ENCODE measurements at regions of chr5 and their contacts with region 1.

Region 1: DNA sequence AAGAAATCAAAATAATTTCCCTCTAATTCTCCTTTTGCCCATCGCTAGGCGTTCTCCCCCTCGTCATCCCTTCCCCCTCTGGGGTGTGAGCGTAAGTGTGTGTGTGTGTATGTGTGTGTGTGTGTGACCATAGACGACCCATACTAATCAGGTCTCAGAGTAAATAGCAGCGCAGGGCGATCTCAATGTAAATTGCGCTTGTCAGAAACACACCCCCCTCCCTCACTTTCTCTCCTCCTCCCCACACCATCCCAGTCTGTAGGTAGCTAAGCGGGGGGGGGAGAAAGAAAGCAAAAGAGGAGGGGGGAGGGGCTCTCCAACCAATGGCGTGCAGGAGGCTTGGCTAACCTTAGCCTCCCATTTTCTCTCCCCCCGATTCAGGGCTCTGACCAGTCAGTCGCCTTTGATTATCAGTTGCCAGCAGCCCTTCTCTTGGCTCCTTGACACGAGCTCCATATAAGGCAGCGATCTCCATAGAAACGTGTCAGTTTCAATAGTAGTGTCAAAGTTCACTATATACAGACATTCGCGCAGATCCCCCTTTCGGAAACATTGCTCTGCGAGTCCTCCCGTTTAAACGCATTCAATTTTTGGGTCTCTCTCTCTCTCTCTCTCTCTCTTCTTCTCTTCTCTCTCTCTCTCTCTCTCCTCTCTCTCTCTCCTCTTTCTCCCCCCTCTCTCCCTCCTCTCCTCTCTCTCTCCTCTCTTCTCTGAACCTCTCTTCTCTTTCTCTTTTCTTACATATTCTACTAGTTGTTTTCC is at the start of gene NR2F1:
- DNase-seq: no peak
- H3K4me3 ChIP-seq: peak within 1 kb of the TSS; percentile 56
- H3K27ac ChIP-seq: peak within 1 kb of the TSS; percentile 68 to 79
- H3K4me1 ChIP-seq: no peaks in the 10 kb centered on the region
- H3K27me3 ChIP-seq: no peaks in the 10 kb centered on the region
- CTCF ChIP-seq: peak in 2 of 4 experiments; percentile 90 to 94
- POLR2A ChIP-seq: no peak
- total RNA-seq, gene NR2F1: 14.9 to 49.3 TPM

Region 2: DNA sequence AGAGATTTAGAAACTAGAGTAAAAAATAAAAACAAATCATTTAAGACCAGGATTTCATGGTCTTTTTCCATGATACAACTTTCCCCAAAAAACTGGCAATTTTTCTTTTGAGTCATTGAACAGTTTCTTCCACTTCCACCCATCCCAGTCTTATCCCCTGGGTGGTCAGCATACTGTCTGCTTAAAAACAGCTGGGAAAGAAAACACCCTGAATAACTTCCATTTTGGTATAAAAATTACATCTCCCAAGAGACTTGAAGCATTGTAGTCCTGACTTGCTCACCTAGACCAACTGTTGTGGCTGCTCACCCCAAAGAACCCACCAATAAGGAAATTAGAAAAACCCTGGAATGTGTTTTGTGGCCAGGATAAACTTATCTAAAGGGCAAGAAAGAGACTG is 733.1 kb before region 1 on chr5:
- intact Hi-C with region 1: loop called (anchors 5 kb)
- DNase-seq: no peak
- H3K4me3 ChIP-seq: no peak overlapping the region
- H3K27ac ChIP-seq: no peak overlapping the region
- H3K4me1 ChIP-seq: no peaks in the 10 kb centered on the region
- H3K27me3 ChIP-seq: no peaks in the 10 kb centered on the region
- CTCF ChIP-seq: no peak
- POLR2A ChIP-seq: no peak

Region 3: DNA sequence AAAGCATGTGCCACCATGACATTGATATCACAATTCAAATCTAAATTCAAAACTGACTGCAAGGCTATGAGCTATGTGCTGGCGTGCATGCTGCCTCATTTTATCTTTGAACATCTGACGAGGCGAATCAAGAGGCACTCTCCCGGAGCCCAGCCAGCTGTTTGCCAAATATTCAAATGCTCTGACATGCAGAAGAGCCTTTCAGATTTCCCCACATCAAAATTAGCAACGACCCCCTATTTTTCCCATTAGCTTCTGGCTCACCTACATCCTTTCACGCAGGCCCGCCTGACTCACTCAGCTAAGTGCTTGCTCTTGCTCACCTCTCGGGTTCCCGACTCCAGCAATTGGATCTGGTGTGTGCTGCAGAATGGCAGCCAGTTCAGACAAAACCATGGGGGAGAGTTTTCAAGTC is 160.9 kb before region 1 on chr5:
- intact Hi-C with region 1: loop called (anchors 10 kb)
- DNase-seq: no peak
- H3K4me3 ChIP-seq: no peak overlapping the region
- H3K27ac ChIP-seq: no peak overlapping the region
- H3K4me1 ChIP-seq: no peaks in the 10 kb centered on the region
- H3K27me3 ChIP-seq: no peaks in the 10 kb centered on the region
- CTCF ChIP-seq: no peak
- POLR2A ChIP-seq: no peak

Region 4: DNA sequence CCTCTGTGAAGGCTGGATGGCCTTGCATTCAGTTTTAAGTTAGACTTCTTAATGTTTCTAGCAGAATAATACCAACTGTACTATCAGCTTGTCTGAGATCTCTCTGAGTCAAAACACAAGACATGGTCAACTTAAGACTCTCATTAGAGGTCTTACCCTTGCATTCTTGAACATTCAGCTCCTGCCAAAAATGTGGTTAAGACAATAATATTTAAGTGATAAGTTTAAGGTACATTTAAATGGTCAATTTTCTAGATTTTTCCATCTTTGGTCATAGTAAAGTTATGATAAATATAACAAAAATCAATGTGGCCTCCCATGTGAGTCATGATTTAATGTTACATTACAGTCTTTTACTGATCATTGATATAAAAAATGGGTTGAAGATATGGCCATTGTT is 75.2 kb after region 1 on chr5:
- intact Hi-C with region 1: no loop called
- DNase-seq: no peak
- H3K4me3 ChIP-seq: no peak overlapping the region
- H3K27ac ChIP-seq: no peak overlapping the region
- H3K4me1 ChIP-seq: no peaks in the 10 kb centered on the region
- H3K27me3 ChIP-seq: no peaks in the 10 kb centered on the region
- CTCF ChIP-seq: no peak
- POLR2A ChIP-seq: no peak

Region 5: GRCh38 chr5:93800988-93801811 is 218.3 kb after region 1 on chr5:
- intact Hi-C with region 1: loop called (anchors 5 kb)
- DNase-seq: peak; percentile 41
- H3K4me3 ChIP-seq: no peak overlapping the region
- H3K27ac ChIP-seq: no peak overlapping the region
- H3K4me1 ChIP-seq: no peaks in the 10 kb centered on the region
- H3K27me3 ChIP-seq: no peaks in the 10 kb centered on the region
- CTCF ChIP-seq: peak in 3 of 4 experiments; percentile 67 to 73 (median 67)
- POLR2A ChIP-seq: no peak

Measured in prostate gland (tissue), 2 donors.